Dorsolateral prefrontal cortex (tissue), 120 donors: ENCODE measurements at regions of chr10 and their contacts with region 1.

Region 1: DNA sequence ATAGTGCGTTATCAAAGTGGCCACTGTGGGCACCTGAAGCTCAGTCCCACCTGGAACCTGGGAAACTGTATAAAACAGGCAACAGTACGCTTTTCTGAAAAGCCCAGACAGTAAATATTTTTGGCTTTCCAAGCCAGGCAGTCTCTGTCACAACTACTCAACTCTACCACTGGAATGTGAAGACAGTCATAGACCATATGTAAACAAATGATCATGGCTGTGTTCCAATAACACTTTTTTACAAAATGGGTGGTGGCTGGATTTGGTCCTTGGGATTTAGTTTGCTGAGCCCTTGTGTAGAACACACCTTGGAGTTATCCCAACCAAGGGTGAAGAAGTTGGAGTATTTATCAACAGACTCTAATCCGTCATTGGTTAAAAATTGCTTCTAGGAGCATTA is 259.9 kb downstream of the SKIDA1 start:
- DNase-seq: no peak
- H3K4me3 ChIP-seq: no peak overlapping the region
- H3K27ac ChIP-seq: no peak overlapping the region
- H3K27me3 ChIP-seq: peaks cover 0 to 3% (median 0%) of the 10 kb centered on the region in 45 donors
- CTCF ChIP-seq: no peak

Region 2: GRCh38 chr10:20863008-20863407 is 402.6 kb before region 1 on chr10:
- intact Hi-C with region 1: loop called (anchors 10 kb)
- DNase-seq: no peak
- H3K4me3 ChIP-seq: no peak overlapping the region
- H3K27ac ChIP-seq: no peak overlapping the region
- H3K27me3 ChIP-seq: no peaks in the 10 kb centered on the region
- CTCF ChIP-seq: no peak

Region 3: DNA sequence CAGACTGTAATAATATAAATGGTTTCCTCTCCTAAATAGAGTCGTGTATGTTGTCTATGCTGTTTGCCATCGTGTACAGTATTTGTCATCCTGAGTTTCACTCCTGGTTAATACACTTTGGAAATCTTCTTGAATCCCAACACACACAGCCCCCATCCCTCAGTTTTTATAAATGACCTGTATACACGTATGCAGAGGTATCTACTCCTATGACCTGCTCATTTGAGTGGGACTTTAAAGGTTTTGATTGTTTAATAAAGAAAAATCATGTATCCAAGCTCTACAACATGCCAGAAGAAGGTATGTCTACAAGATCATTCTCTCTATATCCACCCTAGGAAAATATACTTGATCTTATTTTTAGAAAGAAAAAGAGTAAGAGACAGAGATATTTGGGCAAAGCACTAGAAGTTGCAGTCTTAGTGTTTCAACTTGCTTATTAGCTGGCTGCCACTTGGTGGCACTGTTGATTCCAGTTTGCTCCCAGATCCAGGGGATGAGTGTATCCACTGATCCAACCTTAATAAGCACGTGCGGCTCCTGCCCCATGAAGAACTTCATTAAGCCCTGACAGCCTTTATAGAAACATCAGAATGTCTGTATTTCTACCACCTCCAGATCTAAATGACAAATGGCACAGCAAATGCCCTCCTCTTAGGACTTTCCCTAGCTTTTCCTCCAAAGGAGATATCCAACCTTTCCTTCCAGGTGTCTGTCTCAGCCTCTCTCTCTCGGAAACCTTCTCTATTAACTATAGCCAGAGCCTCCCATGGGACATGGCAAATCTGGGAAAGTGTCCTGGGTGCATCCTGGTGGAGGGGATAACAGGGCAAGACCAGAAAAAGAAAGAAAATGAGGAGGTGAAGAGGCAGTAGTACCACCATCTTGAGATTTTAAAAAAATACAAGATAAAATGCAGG is 187.0 kb before region 1 on chr10:
- intact Hi-C with region 1: loop called in 1 of 2 experiments (anchors 10 kb)
- DNase-seq: peak in 9 of 10 donors; percentile 24 to 75 (median 58)
- H3K4me3 ChIP-seq: no peak overlapping the region
- H3K27ac ChIP-seq: peak overlapping the region in 2 of 59 donors; percentile 14 to 24
- H3K27me3 ChIP-seq: no peaks in the 10 kb centered on the region
- CTCF ChIP-seq: peak; percentile 61 to 90 (median 77)

Region 4: DNA sequence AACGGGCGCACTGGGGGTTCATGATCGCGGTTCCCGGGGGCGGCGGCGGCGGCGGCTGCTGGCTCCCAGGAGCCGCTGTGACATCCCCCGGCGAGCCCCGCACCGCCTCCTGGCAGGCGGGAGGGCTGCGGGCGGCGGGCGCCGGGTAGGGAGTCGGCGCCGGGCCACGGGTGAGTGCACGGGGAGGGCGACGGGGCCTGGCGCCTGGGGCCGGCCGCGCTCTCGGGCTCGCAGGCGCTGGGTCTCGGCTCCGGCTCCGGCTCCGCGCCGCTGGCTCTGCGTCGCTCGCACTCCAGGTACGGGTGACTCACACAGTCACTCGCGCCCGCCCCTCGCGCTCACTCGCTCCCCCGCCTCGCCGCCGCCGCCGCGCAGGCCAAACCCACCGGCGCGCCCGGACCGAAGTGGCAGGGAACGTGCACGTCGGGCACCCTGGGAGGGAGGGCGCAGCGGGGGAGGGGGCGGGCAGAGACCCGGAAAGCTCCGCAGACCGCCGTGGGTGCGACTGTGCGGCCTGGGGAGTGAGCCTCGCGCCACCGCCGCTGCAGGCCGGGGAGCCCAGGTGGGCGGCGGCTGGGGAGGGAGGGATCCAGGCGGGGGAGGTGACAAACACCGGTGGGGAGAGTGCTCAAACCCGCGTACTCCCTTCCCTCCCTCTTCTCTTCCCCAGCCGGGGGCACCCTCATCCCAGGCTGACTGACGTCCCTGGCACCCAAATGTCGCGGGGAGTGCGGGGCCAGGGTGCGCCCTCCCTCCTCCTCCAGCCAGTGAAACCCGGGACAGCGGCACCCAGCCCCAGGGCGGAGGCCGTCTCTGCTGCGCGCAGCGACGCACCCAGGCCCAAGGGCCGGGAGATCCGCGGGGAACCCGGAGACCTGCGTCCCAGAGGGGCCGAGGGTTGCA is 91.6 kb before region 1 on chr10:
- intact Hi-C with region 1: loop called in 1 of 2 experiments (anchors 10 kb)
- DNase-seq: peak in 9 of 10 donors; percentile 36 to 82 (median 76)
- H3K4me3 ChIP-seq: peak overlapping the region; percentile 44 to 86 (median 73)
- H3K27ac ChIP-seq: peak overlapping the region; percentile 31 to 98 (median 93)
- H3K27me3 ChIP-seq: peaks cover 0 to 28% (median 0%) of the 10 kb centered on the region in 45 donors
- CTCF ChIP-seq: peak in 2 of 56 donors; percentile 7 to 14

Region 5: DNA sequence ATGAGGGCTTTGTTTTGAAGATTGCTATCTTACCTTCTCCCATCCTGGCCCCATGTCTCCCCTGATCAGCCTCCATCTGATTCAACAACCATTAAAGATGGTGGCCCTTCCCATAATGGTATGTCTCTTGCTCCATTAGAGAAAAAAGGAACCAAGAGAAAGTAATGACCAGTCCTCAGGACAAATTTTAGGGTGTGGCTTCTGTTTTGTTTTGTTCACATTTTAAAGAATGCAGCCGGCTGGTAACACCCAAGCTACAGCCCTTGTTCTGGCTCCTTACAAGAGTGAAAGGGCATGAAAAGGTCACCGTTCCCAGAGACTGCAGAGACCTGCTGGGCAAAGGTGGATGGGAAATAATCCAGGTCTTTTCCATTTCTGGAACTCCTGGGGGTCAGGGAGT is 80.6 kb before region 1 on chr10:
- intact Hi-C with region 1: no loop called
- DNase-seq: no peak
- H3K4me3 ChIP-seq: no peak overlapping the region
- H3K27ac ChIP-seq: no peak overlapping the region
- H3K27me3 ChIP-seq: no peaks in the 10 kb centered on the region
- CTCF ChIP-seq: no peak